HEK293 (cell line): ENCODE measurements at regions of chr2 and their contacts with region 1.

Region 1: DNA sequence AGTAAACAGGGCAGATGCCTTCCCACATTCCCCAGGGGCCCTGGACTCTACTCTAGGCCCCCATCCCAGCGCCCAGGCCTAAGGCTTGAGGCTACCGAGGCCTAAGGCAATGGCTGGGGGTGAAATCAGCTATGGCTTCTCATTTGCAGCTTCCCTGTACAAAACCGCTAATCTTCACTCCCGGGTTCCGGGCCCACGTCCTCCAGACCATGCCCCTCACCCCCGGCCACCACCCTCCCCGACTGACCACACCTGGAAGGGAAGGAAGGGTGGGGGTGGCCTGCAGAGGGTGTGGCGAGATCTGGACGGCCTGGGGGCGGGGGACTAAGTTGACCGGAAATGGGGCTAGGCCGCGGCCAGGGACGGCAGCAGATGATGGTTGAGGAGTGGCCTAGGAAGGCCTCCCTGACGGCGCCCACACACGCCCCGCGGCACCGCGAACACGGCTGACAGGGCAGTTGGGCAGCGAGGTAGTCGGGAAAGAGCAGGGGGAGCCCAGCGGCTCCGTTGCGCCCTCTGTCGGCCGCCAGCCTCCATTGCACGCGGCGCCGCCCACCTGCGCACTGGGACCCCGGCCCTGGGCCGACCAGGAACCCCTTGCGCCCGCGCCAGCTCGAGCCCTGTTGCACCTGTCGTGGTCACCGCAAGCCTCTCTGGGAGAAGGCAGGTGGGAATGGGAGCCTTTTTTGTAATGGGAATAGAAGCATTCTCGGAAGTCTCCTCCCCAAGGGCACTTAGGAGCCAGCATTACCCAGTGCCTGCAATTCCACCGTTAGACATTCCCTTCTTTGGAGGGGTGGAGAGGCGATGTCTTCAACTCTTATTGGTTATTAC is 117.1 kb upstream of the STPG4 start:
- H3K4me3 ChIP-seq: peak overlapping the region; percentile 28
- H3K27ac ChIP-seq: peak overlapping the region; percentile 2; the same call in 1 of the 2 replicates
- H3K4me1 ChIP-seq: peaks cover 3% of the 10 kb centered on the region; the same call in 1 of the 2 replicates
- CTCF ChIP-seq: peak; percentile 97

Region 2: GRCh38 chr2:47174733-47175361 is 97.4 kb before region 1 on chr2:
- CTCF ChIA-PET with region 1: interaction called, 33 read pairs
- POLR2A ChIA-PET with region 1: no interaction called
- H3K4me3 ChIP-seq: peak overlapping the region; percentile 92
- H3K27ac ChIP-seq: peak overlapping the region; percentile 97
- H3K4me1 ChIP-seq: peaks cover 27% of the 10 kb centered on the region
- CTCF ChIP-seq: no peak